ENCODE measurements at regions of chr10 and their contacts with region 1.

Region 1: DNA sequence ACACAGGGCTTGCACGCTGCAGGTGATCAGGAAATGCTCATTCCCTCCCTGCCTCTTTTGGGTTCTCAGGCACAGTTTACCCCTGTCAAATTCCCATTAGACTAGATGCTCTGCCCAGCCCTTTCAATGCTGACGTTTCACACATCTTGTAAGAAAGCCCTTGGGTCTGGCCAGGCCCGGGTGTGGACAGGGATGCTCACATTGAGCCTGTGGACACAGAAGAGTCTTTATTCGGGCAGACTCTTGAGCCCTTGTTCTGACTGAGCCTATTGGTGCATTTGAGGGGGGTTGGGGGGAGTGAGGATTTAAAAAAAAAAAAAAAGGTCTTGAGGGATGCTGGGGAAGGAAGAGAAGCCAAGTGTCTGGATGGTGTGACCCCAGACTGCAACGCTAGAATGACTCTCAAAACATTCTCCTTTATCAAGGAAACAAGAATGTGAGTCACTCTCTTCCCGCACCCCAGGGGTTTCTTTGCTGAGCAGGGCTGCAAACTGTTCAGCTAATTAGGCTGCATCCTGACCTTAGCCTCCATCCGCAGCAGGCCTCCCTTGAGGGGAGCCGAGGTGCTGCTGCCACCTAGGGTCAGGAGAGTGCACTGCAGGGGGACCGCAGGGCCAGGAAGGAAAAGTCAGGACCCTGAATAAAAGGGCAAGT is 53.6 kb upstream of the TMEM72 start:
- DNase-seq: peak; percentile 69
- ATAC-seq: peak; percentile 92
- H3K4me3 Mint-ChIP-seq: no peak overlapping the region
- H3K27ac Mint-ChIP-seq: no peak overlapping the region
- H3K4me1 Mint-ChIP-seq: no peaks in the 10 kb centered on the region
- H3K27me3 Mint-ChIP-seq: peaks cover 3% of the 10 kb centered on the region
- CTCF ChIP-seq: peak; percentile 93

Region 2: GRCh38 chr10:44870031-44870430 is 12.5 kb after region 1 on chr10:
- CTCF ChIA-PET with region 1: interaction called, 14 read pairs
- POLR2A ChIA-PET with region 1: no interaction called
- intact Hi-C with region 1: no loop called
- DNase-seq: no peak
- ATAC-seq: no peak
- H3K4me3 Mint-ChIP-seq: no peak overlapping the region
- H3K27ac Mint-ChIP-seq: no peak overlapping the region
- H3K4me1 Mint-ChIP-seq: no peaks in the 10 kb centered on the region
- H3K27me3 Mint-ChIP-seq: peaks cover 27% of the 10 kb centered on the region
- CTCF ChIP-seq: no peak

Region 3: GRCh38 chr10:44902941-44903545 is 45.6 kb after region 1 on chr10:
- CTCF ChIA-PET with region 1: no interaction called
- POLR2A ChIA-PET with region 1: no interaction called
- intact Hi-C with region 1: no loop called
- DNase-seq: no peak
- ATAC-seq: no peak
- H3K4me3 Mint-ChIP-seq: no peak overlapping the region
- H3K27ac Mint-ChIP-seq: no peak overlapping the region
- H3K4me1 Mint-ChIP-seq: no peaks in the 10 kb centered on the region
- H3K27me3 Mint-ChIP-seq: no peaks in the 10 kb centered on the region
- CTCF ChIP-seq: no peak

Region 4: GRCh38 chr10:44946205-44946604 is 88.7 kb after region 1 on chr10:
- CTCF ChIA-PET with region 1: no interaction called
- POLR2A ChIA-PET with region 1: no interaction called
- intact Hi-C with region 1: no loop called
- DNase-seq: no peak
- ATAC-seq: peak; percentile 58
- H3K4me3 Mint-ChIP-seq: no peak overlapping the region
- H3K27ac Mint-ChIP-seq: no peak overlapping the region
- H3K4me1 Mint-ChIP-seq: peaks cover 4% of the 10 kb centered on the region
- H3K27me3 Mint-ChIP-seq: peaks cover 11% of the 10 kb centered on the region
- CTCF ChIP-seq: no peak